MCF 10A (cell line): ENCODE measurements at regions of chr19 and their contacts with region 1.

Region 1: DNA sequence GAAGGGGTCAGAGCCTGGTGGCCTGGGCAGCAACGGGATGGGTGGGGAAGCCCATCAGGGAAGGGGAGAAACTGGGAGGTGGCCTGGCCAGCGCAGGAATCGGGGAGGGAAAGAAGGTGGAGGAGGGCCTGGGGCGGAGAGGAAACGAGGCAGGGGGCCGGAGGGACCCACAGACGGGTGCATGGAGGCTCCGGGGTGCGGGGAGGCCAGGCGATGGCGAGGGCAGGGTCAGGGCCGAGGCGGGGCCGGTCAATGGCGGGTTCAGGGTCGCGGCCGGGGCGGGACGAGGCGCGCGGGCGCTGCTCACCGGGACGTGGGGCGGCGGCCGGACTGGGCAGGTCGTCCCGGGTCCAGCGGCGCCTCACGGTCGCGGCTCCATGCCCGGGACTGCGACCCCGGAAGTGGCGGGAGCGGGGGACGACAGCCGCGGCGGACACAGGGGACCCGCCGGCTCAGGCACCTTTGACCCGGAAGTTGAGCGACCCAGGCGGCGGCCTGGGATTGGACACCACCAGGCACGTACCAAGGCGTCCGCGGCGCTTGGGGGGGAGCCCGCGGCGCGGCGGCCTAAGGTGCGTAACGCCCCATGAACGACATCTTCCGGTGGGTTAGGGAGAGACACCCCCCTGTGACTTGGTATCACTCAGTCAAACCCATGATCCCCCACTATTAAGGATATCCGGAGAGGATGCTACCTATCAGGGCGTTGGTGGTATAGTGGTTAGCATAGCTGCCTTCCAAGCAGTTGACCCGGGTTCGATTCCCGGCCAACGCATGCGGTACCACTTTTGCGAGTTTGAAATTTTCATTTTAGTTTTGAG is at the start of gene DPP9:
- DNase-seq: peak; percentile 99
- H3K4me3 Mint-ChIP-seq: peak within 1 kb of the TSS; percentile 93
- H3K27ac Mint-ChIP-seq: peak within 1 kb of the TSS; percentile 73
- H3K4me1 Mint-ChIP-seq: peaks cover 20% of the 10 kb centered on the region
- H3K27me3 Mint-ChIP-seq: no peaks in the 10 kb centered on the region
- CTCF ChIP-seq: no peak
- total RNA-seq, gene DPP9: 90.6 and 100 TPM in 2 replicates

Region 2: GRCh38 chr19:4654437-4655361 is 68.9 kb before region 1 on chr19:
- CTCF ChIA-PET with region 1: no interaction called
- POLR2A ChIA-PET with region 1: no interaction called
- intact Hi-C with region 1: loop called (anchors 5 kb)
- DNase-seq: no peak
- H3K4me3 Mint-ChIP-seq: no peak overlapping the region
- H3K27ac Mint-ChIP-seq: no peak overlapping the region
- H3K4me1 Mint-ChIP-seq: no peaks in the 10 kb centered on the region
- H3K27me3 Mint-ChIP-seq: no peaks in the 10 kb centered on the region
- CTCF ChIP-seq: no peak

Region 3: DNA sequence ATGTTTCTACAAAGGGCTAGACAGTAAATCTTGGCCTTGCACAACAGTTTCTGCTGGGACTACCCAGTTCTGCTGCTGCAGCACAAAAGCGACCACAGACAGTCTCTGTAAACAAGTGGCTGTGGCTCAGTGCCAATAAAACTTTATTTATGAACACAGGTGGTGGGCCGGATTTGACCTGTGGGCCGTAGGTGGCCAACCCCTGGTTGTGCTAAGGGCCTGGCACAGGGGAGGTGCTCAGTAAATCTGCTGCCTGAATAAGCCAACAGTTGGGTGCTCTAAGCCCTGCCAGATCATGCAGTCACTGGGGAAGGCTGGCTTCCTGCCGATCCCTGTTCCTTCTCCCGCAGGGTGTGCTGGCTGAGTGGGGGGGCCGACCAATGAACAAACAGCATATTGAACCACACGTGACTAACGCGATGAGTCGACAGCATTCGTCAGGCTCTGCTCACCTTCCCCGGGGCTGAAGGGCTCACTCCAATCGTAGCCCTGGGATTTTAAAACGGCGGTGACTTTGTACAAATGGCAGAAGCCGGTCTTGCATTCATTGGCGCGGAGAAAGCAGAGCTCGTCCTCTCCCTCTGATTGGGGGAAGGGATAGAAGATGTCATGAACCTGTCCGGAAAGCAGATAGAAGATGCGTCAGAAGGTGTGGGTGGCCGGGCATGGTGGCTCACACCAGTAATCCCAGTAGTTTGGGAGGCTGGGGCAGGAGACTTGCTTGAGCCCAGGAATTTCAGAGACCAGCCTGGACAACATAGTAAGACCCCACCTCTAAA is 29.2 kb before region 1 on chr19:
- CTCF ChIA-PET with region 1: interaction called, 3 read pairs
- POLR2A ChIA-PET with region 1: interaction called, 23 read pairs
- intact Hi-C with region 1: no loop called
- DNase-seq: peak; percentile 100
- H3K4me3 Mint-ChIP-seq: peak overlapping the region; percentile 70
- H3K27ac Mint-ChIP-seq: peak overlapping the region; percentile 93
- H3K4me1 Mint-ChIP-seq: peaks cover 26% of the 10 kb centered on the region
- H3K27me3 Mint-ChIP-seq: no peaks in the 10 kb centered on the region
- CTCF ChIP-seq: no peak

Region 4: GRCh38 chr19:4713384-4713951 is 10.1 kb before region 1 on chr19:
- CTCF ChIA-PET with region 1: interaction called, 4 read pairs
- POLR2A ChIA-PET with region 1: interaction called, 48 read pairs
- intact Hi-C with region 1: loop called (anchors 1 kb)
- DNase-seq: peak; percentile 99
- H3K4me3 Mint-ChIP-seq: peak overlapping the region; percentile 70
- H3K27ac Mint-ChIP-seq: peak overlapping the region; percentile 90
- H3K4me1 Mint-ChIP-seq: peaks cover 24% of the 10 kb centered on the region
- H3K27me3 Mint-ChIP-seq: no peaks in the 10 kb centered on the region
- CTCF ChIP-seq: no peak

Region 5: DNA sequence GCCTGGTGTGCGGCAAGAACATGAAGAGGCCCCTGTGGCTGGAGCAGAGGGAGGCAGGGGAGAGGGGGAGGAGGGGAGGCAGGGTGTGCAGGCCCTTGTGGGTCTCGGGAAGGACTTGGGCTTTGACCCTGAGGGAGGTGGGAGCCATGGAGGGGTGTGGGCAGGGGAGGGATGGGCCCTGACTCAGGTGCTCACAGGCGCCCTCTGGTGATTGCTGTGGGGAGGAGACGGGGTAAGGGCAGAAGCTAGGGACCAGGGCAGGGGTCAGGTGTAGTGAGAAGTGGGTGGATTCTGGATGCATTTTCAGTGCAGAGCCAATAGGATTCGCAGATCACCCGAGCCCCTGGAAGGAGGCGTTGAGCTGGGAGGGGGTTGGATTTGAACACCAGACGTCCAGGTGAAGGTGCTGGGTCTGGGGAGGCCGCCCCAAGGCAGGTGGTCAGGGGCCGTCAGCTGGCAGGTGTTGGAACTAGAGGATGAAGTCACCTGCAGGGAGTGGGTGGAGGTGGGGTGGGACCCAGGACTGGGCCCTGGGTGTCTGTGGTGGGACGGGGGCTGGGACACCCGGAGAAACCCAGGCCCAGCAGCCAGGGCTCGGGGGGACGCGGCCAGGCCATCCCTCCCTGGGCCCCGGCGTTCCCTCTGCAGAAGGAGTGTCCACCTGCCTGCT is 430.7 kb after region 1 on chr19:
- CTCF ChIA-PET with region 1: no interaction called
- POLR2A ChIA-PET with region 1: no interaction called
- intact Hi-C with region 1: no loop called
- DNase-seq: peak; percentile 50
- H3K4me3 Mint-ChIP-seq: no peak overlapping the region
- H3K27ac Mint-ChIP-seq: no peak overlapping the region
- H3K4me1 Mint-ChIP-seq: no peaks in the 10 kb centered on the region
- H3K27me3 Mint-ChIP-seq: no peaks in the 10 kb centered on the region
- CTCF ChIP-seq: peak; percentile 27